ENCODE measurements at regions of chr4 and their contacts with region 1.

Region 1: DNA sequence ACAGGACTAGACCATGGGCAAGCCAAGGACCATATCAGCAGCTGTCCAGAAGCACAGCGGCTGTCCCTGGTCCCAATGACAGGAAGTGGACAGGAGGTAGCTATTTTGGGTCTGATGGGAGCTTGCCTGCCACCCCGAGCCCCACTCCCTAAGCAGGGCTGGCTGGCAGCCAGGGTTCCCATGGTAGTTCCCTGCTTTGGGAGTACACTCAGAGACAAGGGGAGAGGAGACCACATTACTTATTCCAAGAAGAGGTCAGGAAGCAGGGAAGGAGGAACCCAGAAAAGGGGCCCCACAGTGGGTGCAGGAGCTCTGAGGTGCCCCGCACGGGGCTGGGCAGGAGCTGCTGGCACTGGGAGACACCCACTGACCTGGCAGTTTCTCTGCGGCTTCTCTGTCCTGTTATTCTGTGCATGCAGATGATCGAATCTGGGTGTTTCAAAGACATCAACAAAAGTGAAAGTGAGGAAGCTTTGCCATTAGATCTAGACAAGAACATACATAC is 36.3 kb downstream of the HTT-AS start:
- DNase-seq: no peak

Region 2: DNA sequence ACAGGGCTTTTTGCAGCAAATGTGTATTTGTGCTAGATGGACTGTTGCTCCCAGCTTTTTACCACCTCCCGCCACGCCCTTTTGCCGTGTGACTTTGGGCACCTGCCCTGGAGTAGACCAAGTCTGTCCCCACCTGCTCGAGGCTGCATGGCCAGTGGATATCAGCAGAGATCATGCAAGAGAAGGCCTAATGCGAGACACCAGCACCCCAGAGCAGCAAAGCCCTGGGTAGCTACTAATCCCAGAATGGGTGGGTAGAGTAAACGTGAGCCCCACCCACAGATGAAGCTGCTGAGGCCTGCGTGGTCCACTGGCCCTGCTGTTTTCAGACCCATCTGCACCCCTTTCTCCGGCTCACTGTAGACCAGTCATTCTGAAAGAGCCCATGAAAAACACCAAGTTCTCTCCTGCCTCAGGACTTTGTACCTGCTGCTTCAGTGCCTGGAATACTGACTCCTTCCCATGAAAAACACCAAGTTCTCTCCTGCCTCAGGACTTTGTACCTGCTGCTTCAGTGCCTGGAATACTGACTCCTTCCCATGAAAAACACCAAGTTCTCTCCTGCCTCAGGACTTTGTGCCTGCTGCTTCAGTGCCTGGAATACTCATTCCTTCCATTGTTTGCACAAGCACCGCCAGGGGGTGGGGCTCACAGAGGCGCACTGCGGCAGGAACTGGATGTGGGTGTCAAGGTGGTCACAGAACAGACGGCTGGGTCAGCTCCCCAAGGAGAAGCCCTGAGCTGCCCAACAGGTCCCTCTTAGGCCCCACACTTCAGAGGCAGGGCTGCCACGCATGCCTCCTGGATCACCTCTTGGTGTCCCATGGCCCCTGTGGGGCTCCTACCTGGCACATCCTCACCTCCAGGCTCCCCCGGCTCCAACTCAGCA is 276.7 kb before region 1 on chr4:
- intact Hi-C with region 1: loop called in 1 of 2 experiments (anchors 10 kb)
- DNase-seq: peak; percentile 84

Region 3: GRCh38 chr4:2977211-2978088 is 60.6 kb before region 1 on chr4:
- intact Hi-C with region 1: loop called in 1 of 2 experiments (anchors 10 kb)
- DNase-seq: no peak

Measured in posterior vena cava (tissue), 2 donors.